ENCODE measurements at regions of chr11 and their contacts with region 1.

Region 1: DNA sequence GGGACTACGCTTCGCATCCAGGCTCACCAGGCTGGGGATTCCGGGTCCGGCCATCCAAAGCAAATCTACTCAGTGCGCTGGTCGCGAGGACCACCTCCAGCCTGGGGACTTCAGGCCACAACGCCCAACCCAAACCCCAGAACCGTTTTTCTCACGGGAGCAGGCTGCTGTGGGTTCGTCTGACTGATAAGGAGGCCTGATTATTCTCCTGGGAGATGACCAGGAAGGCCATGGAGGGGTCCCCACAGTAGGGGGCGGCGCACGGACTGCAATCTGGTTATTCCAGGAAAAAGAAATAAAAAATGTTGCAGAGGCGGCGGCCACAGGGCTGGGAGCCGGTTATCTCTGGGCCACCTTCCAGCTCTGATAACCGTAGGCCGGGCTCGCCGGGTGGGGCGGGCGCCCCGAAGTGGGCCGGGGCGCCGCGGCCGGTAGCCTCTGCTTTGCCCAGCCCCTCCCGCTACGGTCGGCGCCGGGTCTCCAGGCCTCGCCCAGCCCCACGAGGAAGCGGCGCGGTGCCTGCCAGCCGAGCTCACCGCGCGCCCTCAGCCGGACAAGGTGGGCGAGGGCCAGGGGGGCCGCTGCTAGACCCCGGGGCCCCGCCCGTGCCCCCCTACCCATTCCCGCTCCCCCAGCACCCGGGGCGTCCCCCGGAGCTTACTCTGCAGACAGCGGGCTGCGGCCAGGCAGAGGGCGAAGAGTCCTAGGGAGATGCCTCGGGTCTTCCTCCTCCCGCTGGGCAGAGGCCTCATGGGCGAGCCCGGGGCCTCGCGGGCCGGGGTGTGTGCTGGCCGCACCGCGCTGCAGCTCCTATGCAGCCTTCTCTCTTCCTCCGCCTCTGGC is 446 bp downstream of the VSTM5 start:
- DNase-seq: peak; percentile 55 to 66
- H3K4me3 ChIP-seq: peak overlapping the region; percentile 45
- H3K4me3 Mint-ChIP-seq: peak overlapping the region; percentile 70
- H3K27ac Mint-ChIP-seq: peak overlapping the region; percentile 24
- H3K4me1 ChIP-seq: peaks cover 6% of the 10 kb centered on the region
- H3K4me1 Mint-ChIP-seq: no peaks in the 10 kb centered on the region
- H3K27me3 ChIP-seq: no peaks in the 10 kb centered on the region
- H3K27me3 Mint-ChIP-seq: no peaks in the 10 kb centered on the region
- CTCF ChIP-seq: peak in 1 of 2 experiments; percentile 49

Region 2: DNA sequence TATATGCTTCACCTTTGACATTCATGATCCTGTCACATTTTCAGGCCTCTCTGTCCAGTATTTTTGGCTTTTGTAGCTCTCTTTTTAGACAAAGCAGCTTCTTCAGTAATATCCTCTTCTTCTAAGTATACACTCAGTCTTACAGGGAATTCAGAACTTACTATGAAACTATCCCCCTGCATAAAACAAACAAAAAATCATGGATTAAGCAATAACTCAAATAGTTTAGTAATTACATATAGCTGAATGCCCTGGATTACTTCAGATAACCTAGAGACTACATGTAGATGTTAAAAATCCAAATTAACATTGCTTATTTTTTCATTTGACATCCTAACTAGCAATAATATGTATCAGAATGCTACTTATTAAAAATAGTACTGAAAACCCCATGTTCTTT is 113.8 kb before region 1 on chr11:
- CTCF ChIA-PET with region 1: no interaction called
- POLR2A ChIA-PET with region 1: interaction called, 11 read pairs
- intact Hi-C with region 1: no loop called
- DNase-seq: no peak
- H3K4me3 ChIP-seq: no peak overlapping the region
- H3K4me3 Mint-ChIP-seq: peak overlapping the region; percentile 89
- H3K27ac Mint-ChIP-seq: no peak overlapping the region
- H3K4me1 ChIP-seq: peaks cover 51% of the 10 kb centered on the region
- H3K4me1 Mint-ChIP-seq: peaks cover 56% of the 10 kb centered on the region
- H3K27me3 ChIP-seq: no peaks in the 10 kb centered on the region
- H3K27me3 Mint-ChIP-seq: no peaks in the 10 kb centered on the region
- CTCF ChIP-seq: no peak

Region 3: GRCh38 chr11:93813974-93814373 is 36.0 kb before region 1 on chr11:
- CTCF ChIA-PET with region 1: no interaction called
- POLR2A ChIA-PET with region 1: no interaction called
- intact Hi-C with region 1: loop called (anchors 2 kb)
- DNase-seq: no peak
- H3K4me3 ChIP-seq: no peak overlapping the region
- H3K4me3 Mint-ChIP-seq: no peak overlapping the region
- H3K27ac Mint-ChIP-seq: no peak overlapping the region
- H3K4me1 ChIP-seq: peaks cover 29% of the 10 kb centered on the region
- H3K4me1 Mint-ChIP-seq: peaks cover 6% of the 10 kb centered on the region
- H3K27me3 ChIP-seq: no peaks in the 10 kb centered on the region
- H3K27me3 Mint-ChIP-seq: no peaks in the 10 kb centered on the region
- CTCF ChIP-seq: no peak

Measured in Caco-2 (cell line).